Caco-2 (cell line): ENCODE measurements at regions of chr5 and their contacts with region 1.

Region 1: DNA sequence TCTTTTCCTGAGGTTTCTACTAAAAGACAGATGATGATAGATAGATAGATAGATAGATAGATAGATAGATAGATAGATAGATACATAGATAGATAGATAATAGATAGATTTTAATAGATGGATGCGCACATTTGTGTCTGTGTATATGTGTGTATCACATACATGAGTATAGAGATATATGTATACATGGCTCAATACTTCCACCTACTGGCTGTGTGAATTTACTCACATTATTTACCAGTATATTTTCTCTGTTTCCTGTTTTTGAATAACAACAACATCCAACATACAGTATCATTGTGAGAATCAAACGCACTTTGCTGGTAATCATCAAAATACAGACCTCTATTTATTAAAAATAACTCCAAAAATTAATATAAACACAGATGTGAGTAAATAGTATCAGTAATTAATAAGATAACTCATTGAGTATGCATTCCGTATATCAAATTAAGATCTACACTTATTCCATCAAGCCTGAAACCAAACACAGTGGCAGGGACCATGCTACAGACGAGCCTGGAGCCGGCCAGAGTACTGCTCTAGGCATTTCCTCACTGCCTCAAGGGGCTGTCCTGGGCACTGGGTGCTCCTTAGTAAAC is 338.0 kb downstream of the SEMA5A start:
- DNase-seq: peak in 1 of 2 experiments; percentile 42
- H3K4me3 ChIP-seq: no peak overlapping the region
- H3K4me3 Mint-ChIP-seq: no peak overlapping the region
- H3K27ac Mint-ChIP-seq: no peak overlapping the region
- H3K4me1 ChIP-seq: no peaks in the 10 kb centered on the region
- H3K4me1 Mint-ChIP-seq: no peaks in the 10 kb centered on the region
- H3K27me3 ChIP-seq: no peaks in the 10 kb centered on the region
- H3K27me3 Mint-ChIP-seq: no peaks in the 10 kb centered on the region
- CTCF ChIP-seq: peak; percentile 27 to 72

Region 2: GRCh38 chr5:7927466-7928375 is 1280.2 kb before region 1 on chr5:
- CTCF ChIA-PET with region 1: no interaction called
- POLR2A ChIA-PET with region 1: no interaction called
- intact Hi-C with region 1: loop called (anchors 5 kb)
- DNase-seq: peak; percentile 72 to 73
- H3K4me3 ChIP-seq: no peak overlapping the region
- H3K4me3 Mint-ChIP-seq: no peak overlapping the region
- H3K27ac Mint-ChIP-seq: no peak overlapping the region
- H3K4me1 ChIP-seq: no peaks in the 10 kb centered on the region
- H3K4me1 Mint-ChIP-seq: no peaks in the 10 kb centered on the region
- H3K27me3 ChIP-seq: no peaks in the 10 kb centered on the region
- H3K27me3 Mint-ChIP-seq: peaks cover 14% of the 10 kb centered on the region
- CTCF ChIP-seq: peak; percentile 66 to 77

Region 3: DNA sequence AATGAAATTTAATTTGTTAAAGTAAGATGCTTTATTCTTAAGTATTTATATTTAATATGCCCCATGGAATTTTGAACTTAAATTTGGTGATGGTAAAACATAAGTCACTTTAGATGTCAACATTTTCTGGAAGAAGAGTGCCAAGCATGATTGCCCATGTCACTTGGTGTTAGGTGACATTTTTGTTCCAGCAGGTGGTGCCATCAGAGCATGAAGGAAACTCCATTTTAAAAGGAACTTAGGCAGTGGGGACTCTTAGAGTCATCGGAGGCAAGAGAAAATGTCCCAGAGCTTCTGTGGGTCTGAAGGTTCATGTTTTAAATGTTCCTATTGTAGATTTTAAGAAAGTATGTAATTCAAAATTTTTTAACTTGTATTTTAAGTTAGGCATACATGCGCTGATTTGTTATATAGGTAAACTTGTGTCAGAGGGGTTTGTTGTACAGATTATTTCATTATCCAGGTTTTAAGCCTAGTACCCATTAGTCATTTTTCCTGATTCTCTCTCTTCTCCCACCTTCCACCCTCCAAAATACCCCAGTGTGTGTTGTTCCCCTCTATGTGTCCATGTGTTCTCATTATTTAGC is 451.3 kb before region 1 on chr5:
- CTCF ChIA-PET with region 1: no interaction called
- POLR2A ChIA-PET with region 1: no interaction called
- intact Hi-C with region 1: loop called (anchors 1 kb)
- DNase-seq: peak in 1 of 2 experiments; percentile 33
- H3K4me3 ChIP-seq: no peak overlapping the region
- H3K4me3 Mint-ChIP-seq: no peak overlapping the region
- H3K27ac Mint-ChIP-seq: no peak overlapping the region
- H3K4me1 ChIP-seq: no peaks in the 10 kb centered on the region
- H3K4me1 Mint-ChIP-seq: no peaks in the 10 kb centered on the region
- H3K27me3 ChIP-seq: no peaks in the 10 kb centered on the region
- H3K27me3 Mint-ChIP-seq: peaks cover 10% of the 10 kb centered on the region
- CTCF ChIP-seq: peak in 1 of 2 experiments; percentile 45

Region 4: DNA sequence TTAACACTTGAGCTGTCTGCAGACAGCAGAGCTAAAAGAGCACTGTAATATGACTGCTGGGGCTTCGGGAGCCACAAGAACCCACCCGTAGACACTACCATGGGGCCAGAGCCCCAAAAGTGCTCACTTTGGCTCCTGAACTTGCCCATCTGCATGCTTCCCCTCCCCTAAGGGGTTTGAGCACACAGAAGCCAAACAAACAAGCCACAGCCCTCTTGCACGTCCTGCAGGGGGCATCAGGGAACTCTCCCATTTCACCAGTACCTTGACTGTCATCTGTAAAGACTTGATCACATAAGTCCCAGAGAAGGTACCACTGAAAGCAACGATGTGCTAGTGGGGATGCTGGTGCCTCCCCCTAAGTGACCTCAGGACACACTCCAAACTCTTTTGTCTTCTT is 343.9 kb before region 1 on chr5:
- CTCF ChIA-PET with region 1: no interaction called
- POLR2A ChIA-PET with region 1: no interaction called
- intact Hi-C with region 1: loop called (anchors 1 kb)
- DNase-seq: peak in 1 of 2 experiments; percentile 55
- H3K4me3 ChIP-seq: no peak overlapping the region
- H3K4me3 Mint-ChIP-seq: no peak overlapping the region
- H3K27ac Mint-ChIP-seq: no peak overlapping the region
- H3K4me1 ChIP-seq: no peaks in the 10 kb centered on the region
- H3K4me1 Mint-ChIP-seq: no peaks in the 10 kb centered on the region
- H3K27me3 ChIP-seq: no peaks in the 10 kb centered on the region
- H3K27me3 Mint-ChIP-seq: peaks cover 3% of the 10 kb centered on the region
- CTCF ChIP-seq: peak; percentile 65 to 75

Region 5: DNA sequence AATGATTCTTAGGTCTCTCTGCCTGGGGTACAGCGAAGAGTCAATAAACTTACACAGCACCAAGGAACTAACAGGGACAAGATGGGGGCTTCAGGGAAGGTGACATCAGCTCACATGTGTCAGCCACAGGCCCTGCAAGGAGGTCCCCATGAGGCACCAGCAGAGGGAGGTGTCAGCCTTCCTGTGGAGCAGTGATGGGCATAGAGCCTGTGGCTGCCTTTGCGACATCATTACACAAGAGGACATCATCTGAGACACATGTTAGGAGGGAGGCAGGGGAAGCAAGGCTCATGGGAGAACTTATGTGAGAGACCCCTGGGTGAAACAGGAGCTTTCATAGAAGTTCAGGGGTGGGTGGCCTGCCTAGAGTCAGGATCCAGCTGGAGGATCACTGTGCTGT is 51.6 kb before region 1 on chr5:
- CTCF ChIA-PET with region 1: interaction called, 3 read pairs
- POLR2A ChIA-PET with region 1: no interaction called
- intact Hi-C with region 1: loop called (anchors 1 kb)
- DNase-seq: peak; percentile 69 to 73
- H3K4me3 ChIP-seq: no peak overlapping the region
- H3K4me3 Mint-ChIP-seq: no peak overlapping the region
- H3K27ac Mint-ChIP-seq: no peak overlapping the region
- H3K4me1 ChIP-seq: peaks cover 13% of the 10 kb centered on the region
- H3K4me1 Mint-ChIP-seq: peaks cover 16% of the 10 kb centered on the region
- H3K27me3 ChIP-seq: no peaks in the 10 kb centered on the region
- H3K27me3 Mint-ChIP-seq: no peaks in the 10 kb centered on the region
- CTCF ChIP-seq: peak; percentile 64 to 84